ENCODE measurements at regions of chr15 and their contacts with region 1.

Region 1: DNA sequence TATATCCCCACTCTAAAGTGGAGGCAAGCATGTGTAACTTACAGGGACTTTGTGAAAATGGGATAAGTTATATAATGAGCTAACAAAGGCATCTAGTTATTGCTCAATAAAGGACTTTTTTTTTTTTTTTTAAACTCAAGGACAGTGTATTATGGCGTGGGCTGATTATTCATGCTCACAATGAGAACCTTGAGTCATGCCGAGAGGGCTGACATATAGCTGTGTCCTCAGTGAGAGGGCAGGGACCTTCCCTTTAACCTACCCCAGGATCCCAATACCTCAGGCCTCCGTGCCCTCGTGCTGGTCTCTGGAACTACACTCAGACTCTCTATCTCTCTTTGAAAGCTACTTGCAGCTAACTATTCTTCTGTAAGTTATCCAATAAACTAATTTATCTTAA is 319.9 kb upstream of the ICE2 start:
- DNase-seq: peak; percentile 84
- H3K4me3 Mint-ChIP-seq: peak overlapping the region; percentile 28
- H3K27ac Mint-ChIP-seq: peak overlapping the region; percentile 82
- H3K4me1 Mint-ChIP-seq: peaks cover 90% of the 10 kb centered on the region
- H3K27me3 Mint-ChIP-seq: no peaks in the 10 kb centered on the region

Region 2: DNA sequence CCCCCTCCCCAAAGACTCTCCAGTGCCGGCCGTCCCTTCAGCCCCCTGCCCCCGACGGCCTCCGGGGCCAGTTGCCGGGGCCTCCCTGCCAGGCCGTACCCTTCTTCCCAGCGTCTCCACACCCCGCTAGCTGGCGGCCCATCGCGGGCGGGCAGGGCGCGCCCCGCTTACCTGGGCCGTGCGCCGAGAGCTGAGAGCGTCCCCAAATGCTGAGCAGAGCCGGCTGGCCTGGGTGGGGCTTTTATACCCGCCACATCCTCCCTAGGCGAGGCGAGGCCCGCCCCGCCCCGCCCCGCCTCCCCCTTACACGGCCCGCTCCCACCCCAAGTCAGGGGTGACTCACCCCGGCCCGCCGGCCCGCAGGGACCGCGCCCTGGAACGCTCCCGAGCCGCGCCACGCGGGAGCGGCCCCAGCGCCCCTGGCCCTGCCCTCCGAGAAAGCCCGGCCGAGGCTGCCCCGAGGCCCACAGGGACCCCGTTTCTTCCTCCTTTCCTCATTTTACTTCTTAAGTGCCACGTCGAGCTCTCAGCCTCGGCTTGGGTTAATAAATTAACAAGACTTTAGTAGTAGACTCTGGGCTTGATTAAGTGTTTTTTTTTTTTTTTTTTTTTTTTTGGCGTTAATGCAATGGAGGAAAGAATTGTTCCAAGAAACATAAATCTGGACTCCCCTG is 400.9 kb before region 1 on chr15 and contains the start of gene ANXA2:
- CTCF ChIA-PET with region 1: no interaction called
- POLR2A ChIA-PET with region 1: no interaction called
- intact Hi-C with region 1: loop called (anchors 5 kb)
- DNase-seq: peak; percentile 89
- H3K4me3 Mint-ChIP-seq: peak within 1 kb of the TSS; percentile 93
- H3K27ac Mint-ChIP-seq: peak within 1 kb of the TSS; percentile 91
- H3K4me1 Mint-ChIP-seq: peaks cover 45% of the 10 kb centered on the region
- H3K27me3 Mint-ChIP-seq: peaks cover 2% of the 10 kb centered on the region
- total RNA-seq, gene ANXA2: 131 to 132 TPM

Region 3: DNA sequence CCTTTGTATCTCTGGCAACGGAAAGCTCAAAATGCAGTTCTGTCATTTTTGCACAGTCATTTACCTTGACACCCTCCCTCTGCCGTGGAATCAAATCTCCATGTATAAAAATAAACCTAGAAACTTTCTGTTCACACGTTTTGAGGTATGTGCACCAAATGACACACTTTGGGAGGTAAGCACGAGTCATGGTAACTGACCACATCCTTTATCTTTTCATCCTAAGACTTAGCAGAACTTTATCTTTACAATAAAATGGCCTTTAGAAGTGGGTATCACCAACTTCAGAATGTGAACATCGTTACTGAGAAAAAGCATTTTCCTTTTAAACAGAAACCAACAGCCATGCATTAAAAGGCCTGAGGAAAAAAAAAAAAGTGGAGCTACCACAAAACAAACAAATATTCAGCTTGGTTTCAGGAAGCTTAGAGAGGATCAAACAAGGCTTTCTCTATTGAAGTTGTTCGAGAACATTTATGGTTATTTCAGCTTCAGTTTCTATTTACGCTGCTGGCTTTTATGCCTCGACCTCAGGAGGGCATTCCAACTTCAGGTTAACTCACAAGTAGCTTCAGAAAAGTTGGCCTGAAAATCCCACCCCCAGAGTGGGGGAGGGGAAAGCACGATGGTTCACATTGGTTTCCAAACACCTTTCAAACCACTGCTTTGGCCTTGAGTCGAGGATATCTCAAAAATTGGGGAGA is 148.8 kb before region 1 on chr15:
- CTCF ChIA-PET with region 1: interaction called, 8 read pairs
- POLR2A ChIA-PET with region 1: interaction called, 10 read pairs
- intact Hi-C with region 1: loop called (anchors 1 kb)
- DNase-seq: peak; percentile 68
- H3K4me3 Mint-ChIP-seq: peak overlapping the region; percentile 54
- H3K27ac Mint-ChIP-seq: peak overlapping the region; percentile 87
- H3K4me1 Mint-ChIP-seq: peaks cover 58% of the 10 kb centered on the region
- H3K27me3 Mint-ChIP-seq: no peaks in the 10 kb centered on the region

Region 4: DNA sequence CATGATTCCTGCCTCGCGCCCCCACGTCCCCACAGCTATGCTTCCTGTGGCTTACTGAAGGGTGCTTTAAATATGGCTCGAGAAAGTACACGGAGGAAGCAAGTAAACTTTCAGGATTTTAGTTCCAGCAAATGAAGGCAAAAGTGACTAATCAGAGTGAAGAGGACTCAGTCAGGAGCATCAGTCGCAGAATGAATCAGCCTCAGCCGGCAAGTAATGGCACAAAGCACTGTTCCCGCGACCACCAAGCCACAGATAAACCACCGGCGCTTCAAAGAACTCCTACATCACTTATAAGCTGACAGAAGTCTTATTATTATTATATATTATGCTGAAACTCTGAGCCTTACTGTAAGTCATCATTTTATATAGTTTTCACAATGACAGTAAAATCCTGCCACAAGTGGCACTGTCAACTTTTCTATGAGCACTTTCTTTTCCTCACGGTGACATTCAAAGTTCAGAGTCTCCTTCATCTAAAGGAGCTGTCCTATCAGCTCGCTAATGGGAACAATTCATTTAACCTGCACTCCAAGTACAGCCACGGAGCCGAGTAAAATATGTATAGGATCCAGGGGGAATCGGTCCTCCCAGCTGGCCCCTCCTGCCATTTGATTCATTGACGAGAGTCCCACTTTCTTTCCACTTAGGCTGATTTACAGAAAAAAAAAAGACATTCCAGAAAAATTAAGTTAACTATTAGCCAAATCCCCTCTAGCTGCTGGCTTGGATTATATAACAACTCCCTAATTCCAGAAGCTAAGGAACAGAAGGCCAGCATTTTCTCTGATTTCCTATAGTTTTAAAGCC is 102.9 kb before region 1 on chr15:
- CTCF ChIA-PET with region 1: interaction called, 10 read pairs
- POLR2A ChIA-PET with region 1: interaction called, 13 read pairs
- intact Hi-C with region 1: loop called (anchors 1 kb)
- DNase-seq: peak; percentile 95
- H3K4me3 Mint-ChIP-seq: peak overlapping the region; percentile 57
- H3K27ac Mint-ChIP-seq: peak overlapping the region; percentile 80
- H3K4me1 Mint-ChIP-seq: peaks cover 84% of the 10 kb centered on the region
- H3K27me3 Mint-ChIP-seq: no peaks in the 10 kb centered on the region

Region 5: GRCh38 chr15:60760646-60761504 is 37.9 kb before region 1 on chr15:
- CTCF ChIA-PET with region 1: interaction called, 4 read pairs
- POLR2A ChIA-PET with region 1: interaction called, 3 read pairs
- intact Hi-C with region 1: loop called (anchors 2 kb)
- DNase-seq: peak; percentile 51
- H3K4me3 Mint-ChIP-seq: peak overlapping the region; percentile 27
- H3K27ac Mint-ChIP-seq: peak overlapping the region; percentile 44
- H3K4me1 Mint-ChIP-seq: peaks cover 35% of the 10 kb centered on the region
- H3K27me3 Mint-ChIP-seq: no peaks in the 10 kb centered on the region

Region 6: GRCh38 chr15:60774829-60775463 is 23.9 kb before region 1 on chr15:
- CTCF ChIA-PET with region 1: interaction called, 4 read pairs
- POLR2A ChIA-PET with region 1: interaction called, 5 read pairs
- intact Hi-C with region 1: loop called (anchors 2 kb)
- DNase-seq: peak; percentile 37
- H3K4me3 Mint-ChIP-seq: peak overlapping the region; percentile 11
- H3K27ac Mint-ChIP-seq: peak overlapping the region; percentile 86
- H3K4me1 Mint-ChIP-seq: peaks cover 71% of the 10 kb centered on the region
- H3K27me3 Mint-ChIP-seq: no peaks in the 10 kb centered on the region

Region 7: DNA sequence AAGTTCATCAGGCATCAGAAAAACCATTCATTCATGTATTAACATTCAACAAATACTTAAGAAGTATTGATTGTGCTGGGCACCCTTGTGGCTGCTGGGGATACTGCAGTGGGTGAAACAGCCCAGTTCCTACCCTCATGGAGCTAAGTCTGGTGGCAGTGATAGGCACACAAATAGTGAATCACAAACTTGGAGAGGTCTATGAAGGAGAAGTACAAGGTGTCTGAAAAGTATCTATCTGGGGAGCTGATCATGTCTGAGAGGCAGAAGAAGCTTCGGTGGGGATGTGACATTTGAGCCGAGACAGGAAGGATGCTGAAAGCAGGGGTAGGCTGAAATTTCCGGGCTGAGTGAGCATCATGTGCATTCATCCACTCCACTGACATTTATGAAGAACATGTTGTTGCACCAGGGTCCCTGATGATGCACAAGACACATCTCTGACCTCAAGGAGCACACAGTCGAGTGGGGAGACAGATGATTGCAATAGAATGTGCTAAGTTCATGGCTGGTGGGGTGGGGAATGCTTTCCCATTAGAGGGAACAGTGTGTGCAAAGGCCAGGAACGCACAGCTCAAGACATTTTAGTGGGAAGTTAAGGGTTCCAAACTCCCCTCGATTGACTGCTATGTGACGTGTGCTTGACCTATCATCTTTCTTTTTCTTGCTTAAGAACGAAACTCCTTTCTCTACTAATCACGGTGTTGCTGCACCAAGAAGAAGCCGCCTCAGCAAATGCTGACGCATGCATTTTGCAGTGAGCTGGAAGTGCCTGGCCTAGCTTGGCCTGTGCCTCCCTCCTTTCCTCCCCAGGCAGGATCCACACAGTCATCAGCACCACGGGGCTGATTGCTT is 10.8 kb before region 1 on chr15:
- CTCF ChIA-PET with region 1: interaction called, 28 read pairs
- POLR2A ChIA-PET with region 1: interaction called, 20 read pairs
- intact Hi-C with region 1: loop called (anchors 1 kb)
- DNase-seq: peak; percentile 77
- H3K4me3 Mint-ChIP-seq: peak overlapping the region; percentile 13
- H3K27ac Mint-ChIP-seq: peak overlapping the region; percentile 79
- H3K4me1 Mint-ChIP-seq: peaks cover 72% of the 10 kb centered on the region
- H3K27me3 Mint-ChIP-seq: no peaks in the 10 kb centered on the region

Region 8: GRCh38 chr15:60814062-60814461 is 15.2 kb after region 1 on chr15:
- CTCF ChIA-PET with region 1: no interaction called
- POLR2A ChIA-PET with region 1: no interaction called
- intact Hi-C with region 1: no loop called
- DNase-seq: no peak
- H3K4me3 Mint-ChIP-seq: no peak overlapping the region
- H3K27ac Mint-ChIP-seq: no peak overlapping the region
- H3K4me1 Mint-ChIP-seq: peaks cover 41% of the 10 kb centered on the region
- H3K27me3 Mint-ChIP-seq: no peaks in the 10 kb centered on the region